ENCODE measurements at regions of chr1 and their contacts with region 1.

Region 1: GRCh38 chr1:145871994-145872924 is 13.4 kb upstream of the PIAS3 start:
- DNase-seq: peak; percentile 49
- H3K4me3 Mint-ChIP-seq: peak overlapping the region; percentile 66
- H3K27ac Mint-ChIP-seq: peak overlapping the region; percentile 63
- H3K4me1 Mint-ChIP-seq: peaks cover 18% of the 10 kb centered on the region
- H3K27me3 Mint-ChIP-seq: peaks cover 50% of the 10 kb centered on the region

Region 2: GRCh38 chr1:145782166-145783099 is 89.8 kb before region 1 on chr1:
- CTCF ChIA-PET with region 1: no interaction called
- POLR2A ChIA-PET with region 1: no interaction called
- DNase-seq: no peak
- H3K4me3 Mint-ChIP-seq: no peak overlapping the region
- H3K27ac Mint-ChIP-seq: no peak overlapping the region
- H3K4me1 Mint-ChIP-seq: peaks cover 31% of the 10 kb centered on the region
- H3K27me3 Mint-ChIP-seq: no peaks in the 10 kb centered on the region

Region 3: DNA sequence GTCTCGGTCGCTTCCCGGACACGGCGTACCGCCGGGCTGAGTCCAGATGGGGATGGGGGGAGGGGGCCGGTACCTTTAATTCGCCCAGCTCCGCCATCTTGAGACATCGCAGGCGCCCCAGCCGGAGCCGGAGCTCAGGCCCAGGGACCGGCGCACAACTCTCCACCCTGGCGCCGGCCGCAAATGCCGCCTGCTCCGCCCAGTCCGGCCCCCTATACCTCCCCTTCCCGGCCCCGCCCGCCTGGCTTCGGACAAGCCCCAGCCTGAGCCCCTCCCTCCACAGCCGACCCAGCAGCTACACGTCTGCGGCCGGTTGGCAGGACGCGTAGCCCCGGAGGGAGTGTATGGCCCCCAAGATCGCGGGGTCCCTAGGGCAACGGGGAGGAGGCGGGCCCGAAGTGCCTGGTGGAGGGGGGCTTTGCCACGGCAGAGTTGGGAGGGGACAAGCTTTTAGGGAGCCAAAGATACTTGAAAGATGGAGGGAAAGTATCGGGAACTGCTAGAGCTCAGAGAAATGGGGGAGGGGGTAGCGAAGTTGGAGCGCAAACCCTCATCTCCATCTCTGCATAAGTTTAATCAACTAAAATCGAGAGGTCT is 13.3 kb before region 1 on chr1 and contains the start of gene PIAS3:
- CTCF ChIA-PET with region 1: interaction called, 21 read pairs
- POLR2A ChIA-PET with region 1: interaction called, 3 read pairs
- DNase-seq: peak; percentile 87
- H3K4me3 Mint-ChIP-seq: peak within 1 kb of the TSS; percentile 91
- H3K27ac Mint-ChIP-seq: peak within 1 kb of the TSS; percentile 88
- H3K4me1 Mint-ChIP-seq: peaks cover 24% of the 10 kb centered on the region
- H3K27me3 Mint-ChIP-seq: peaks cover 10% of the 10 kb centered on the region
- total RNA-seq, gene PIAS3: 17.9 to 18.8 TPM

Region 4: DNA sequence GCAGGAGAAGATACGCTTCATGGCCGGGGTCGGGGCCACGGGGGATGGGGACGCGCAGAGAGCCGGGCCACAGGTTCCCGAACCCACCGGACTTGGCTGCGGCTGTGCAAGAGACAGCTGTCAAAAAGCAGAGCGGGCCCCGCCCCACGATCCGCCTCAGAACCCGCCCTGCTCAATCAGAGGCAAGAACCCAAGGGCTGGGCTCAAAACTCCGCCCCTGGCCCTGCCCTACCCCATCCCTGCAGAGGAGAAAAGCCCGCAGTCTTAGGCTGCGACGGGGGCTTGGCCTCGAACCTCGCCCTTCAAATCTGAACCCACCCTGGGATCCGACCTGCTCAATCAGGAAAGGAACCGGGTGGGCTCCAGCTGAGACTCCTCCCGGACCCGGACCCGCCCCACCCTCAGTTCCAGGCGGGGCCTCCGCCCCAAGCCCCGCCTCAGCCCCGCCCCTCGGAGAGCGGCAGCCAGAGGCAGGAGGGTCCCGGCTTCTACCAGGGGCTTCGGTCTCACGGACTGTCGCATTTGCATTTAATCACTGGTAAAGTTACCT is 13.6 kb after region 1 on chr1 and contains the start of gene ANKRD35:
- CTCF ChIA-PET with region 1: interaction called, 63 read pairs
- POLR2A ChIA-PET with region 1: no interaction called
- DNase-seq: peak; percentile 92
- H3K4me3 Mint-ChIP-seq: peak within 1 kb of the TSS; percentile 77
- H3K27ac Mint-ChIP-seq: no peak within 1 kb of the TSS
- H3K4me1 Mint-ChIP-seq: peaks cover 14% of the 10 kb centered on the region
- H3K27me3 Mint-ChIP-seq: peaks cover 33% of the 10 kb centered on the region
- total RNA-seq, gene ANKRD35: 0.40 to 0.42 TPM

Region 5: DNA sequence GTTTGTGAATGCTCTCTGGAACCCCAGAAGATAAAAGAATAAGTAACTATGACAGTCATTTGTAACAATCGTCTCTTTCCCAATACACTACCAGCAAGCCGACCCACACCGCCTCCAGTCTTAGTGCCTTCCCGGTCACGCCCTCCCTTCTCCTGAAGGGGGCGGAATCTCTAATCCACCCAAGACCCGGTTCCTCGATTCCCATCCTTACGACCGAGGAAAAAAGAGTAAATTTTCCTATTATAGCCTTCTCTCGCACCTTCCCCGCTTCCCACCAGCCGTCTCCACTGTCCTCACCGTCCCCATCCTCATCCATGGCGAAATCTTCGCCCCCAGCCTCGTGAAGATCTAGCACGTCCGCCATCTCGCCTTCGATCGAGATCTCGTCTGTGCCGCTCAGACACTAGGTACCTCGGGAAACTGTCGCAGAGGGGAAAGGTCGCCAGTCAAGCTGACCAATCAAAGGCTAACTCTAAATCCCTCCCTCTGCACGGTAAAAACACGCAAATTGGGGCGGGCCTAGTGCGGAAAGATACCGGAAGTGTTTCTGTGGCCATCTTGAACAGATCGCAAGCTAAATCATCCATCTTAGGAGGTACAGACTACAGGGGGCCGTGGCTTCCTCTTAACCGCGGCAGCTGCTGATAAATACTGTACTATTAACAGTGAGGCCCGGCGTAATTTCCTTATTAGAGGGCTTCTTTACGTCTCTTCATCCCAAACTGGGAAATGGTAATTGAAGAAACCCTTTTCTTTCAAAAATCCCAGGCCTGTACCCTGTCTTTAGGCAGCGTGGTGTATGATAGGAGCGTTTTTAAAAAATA is 55.0 kb after region 1 on chr1 and contains the start of gene RBM8A:
- CTCF ChIA-PET with region 1: interaction called, 10 read pairs
- POLR2A ChIA-PET with region 1: no interaction called
- DNase-seq: peak; percentile 98
- H3K4me3 Mint-ChIP-seq: no peak within 1 kb of the TSS
- H3K27ac Mint-ChIP-seq: no peak within 1 kb of the TSS
- H3K4me1 Mint-ChIP-seq: peaks cover 29% of the 10 kb centered on the region
- H3K27me3 Mint-ChIP-seq: no peaks in the 10 kb centered on the region
- total RNA-seq, gene RBM8A: 175 to 188 TPM

Measured in activated CD4-positive, alpha-beta T cell treated with anti-CD3 and anti-CD28 coated beads, Interleukin-2, amount 10 ng/mL, durations not matched to agents 7 days and 5 days (primary cell).